ENCODE measurements at regions of chr17 and their contacts with region 1.

Region 1: DNA sequence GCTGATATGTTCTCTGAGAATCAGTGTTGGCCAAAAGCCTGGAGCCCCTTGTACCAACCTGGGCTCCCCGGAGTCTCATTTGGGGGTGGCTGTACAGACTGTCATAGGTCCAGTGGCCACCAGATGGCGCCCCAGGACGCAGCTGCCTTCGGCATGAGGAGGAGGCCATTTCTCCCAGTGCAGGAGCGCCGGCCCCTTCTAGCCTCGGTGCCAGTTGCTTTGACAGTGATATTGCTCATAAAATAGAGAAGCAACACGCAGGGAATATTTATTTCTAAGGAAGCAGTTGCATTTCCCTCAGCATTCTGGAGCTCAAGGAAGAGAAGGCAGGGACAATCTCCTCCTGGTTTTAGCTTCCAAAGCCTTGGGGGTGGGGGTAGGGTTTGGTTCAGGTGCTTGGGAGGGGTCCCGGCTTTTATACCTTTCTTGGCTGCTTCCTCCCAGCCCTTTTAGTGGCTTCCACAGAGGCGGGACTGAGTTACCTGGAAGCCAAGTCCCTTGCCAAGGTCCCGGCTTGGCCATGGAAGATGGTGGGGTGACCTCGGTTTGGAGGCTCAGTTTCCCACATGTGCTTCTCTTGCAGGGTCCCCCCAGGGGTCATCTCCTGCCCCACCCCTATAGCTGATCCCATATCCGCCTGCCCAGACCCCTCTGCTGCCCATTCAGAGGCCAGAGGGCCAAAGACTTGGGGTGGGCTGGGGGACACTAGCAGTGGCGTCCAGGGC is 117.8 kb upstream of the CDC42EP4 start:
- DNase-seq: peak; percentile 78 to 95 (median 88)

Region 2: GRCh38 chr17:73643001-73643851 is 213.6 kb after region 1 on chr17:
- intact Hi-C with region 1: loop called (anchors 5 kb)
- DNase-seq: peak in 29 of 42 donors; percentile 19 to 70 (median 43)

Region 3: DNA sequence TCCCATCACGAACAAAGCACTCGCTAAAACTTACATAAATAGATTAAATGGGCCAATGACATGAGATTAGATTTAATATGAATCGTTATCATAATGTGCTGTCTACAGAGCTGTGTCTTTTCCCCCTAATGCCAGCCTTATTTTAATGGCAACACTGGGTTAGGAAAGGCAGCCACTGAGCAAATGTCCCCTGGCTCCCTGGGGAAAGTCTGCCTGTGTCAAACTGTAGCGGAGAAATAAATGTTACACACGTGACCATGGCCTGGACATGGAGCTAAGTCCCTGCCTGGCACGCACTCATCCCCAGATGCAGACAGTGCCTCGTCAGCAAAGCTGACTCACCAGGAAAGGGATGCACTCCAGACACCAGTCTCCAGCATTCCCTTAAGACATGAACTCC is 276.0 kb after region 1 on chr17:
- intact Hi-C with region 1: loop called (anchors 5 kb)
- DNase-seq: peak in 22 of 42 donors; percentile 16 to 72 (median 46)

Region 4: DNA sequence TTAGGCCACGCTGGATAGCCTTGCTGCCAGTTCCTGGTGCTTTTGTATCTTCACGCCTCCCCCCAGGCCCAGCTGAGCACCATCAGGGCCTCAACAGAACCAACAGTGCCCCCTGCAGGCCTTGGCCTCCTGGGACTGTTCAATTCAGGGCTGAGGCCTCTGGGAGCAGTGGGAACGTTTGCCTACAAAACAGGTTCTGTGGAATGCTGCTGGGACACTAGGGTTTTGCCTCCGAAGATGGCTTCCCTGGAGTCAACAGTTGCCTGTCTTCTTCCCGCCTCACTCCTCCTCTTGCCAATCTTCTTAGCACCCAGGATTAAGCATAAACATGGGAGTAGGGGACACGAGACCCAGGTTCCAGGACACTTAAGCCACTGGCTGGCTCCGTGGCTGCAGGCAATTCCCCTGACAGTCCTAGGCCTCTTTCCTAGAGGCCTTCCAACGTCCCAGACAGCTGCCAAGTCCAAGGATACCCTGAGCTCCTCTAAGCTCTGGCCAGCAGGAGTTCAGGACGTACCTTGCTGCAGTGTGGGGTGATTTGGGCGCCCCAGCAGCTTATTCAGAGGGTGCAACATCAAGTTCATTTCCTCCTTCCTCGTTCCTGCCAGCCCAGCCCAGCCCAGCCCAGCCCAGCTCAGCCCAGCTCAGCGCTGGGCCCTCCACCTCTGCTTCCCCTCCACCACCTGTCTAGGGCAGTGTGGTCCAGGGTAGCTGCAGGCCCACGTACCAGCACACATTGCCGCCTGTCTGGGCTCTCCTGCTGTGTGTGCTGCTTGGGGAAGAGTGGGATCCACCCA is 527.3 kb after region 1 on chr17:
- intact Hi-C with region 1: loop called (anchors 5 kb)
- DNase-seq: peak; percentile 66 to 91 (median 83)

Region 5: GRCh38 chr17:74176546-74177001 is 747.0 kb after region 1 on chr17:
- intact Hi-C with region 1: loop called (anchors 10 kb)
- DNase-seq: peak; percentile 35 to 86 (median 72)

Measured in head of caudate nucleus (tissue), 42 donors.